A549 (cell line): ENCODE measurements at regions of chr11 and their contacts with region 1.

Region 1: GRCh38 chr11:35598254-35599125 is 19.8 kb upstream of the FJX1 start:
- DNase-seq: peak in 1 of 2 experiments; percentile 41
- ATAC-seq: peak; percentile 56 to 79; a peak in 5 of 6 replicates
- H3K4me3 ChIP-seq: no peak overlapping the region
- H3K27ac ChIP-seq: peak overlapping the region in 1 of 2 experiments; percentile 43; a peak in 3 of 6 replicates
- H3K4me1 ChIP-seq: no peaks in the 10 kb centered on the region; the same call in 2 of the 3 replicates
- CTCF ChIP-seq: no peak
- EP300 ChIP-seq: no peak
- POLR2A ChIP-seq: no peak
- RAD21 ChIP-seq: no peak

Region 2: GRCh38 chr11:35617687-35618496 is 19.4 kb after region 1 on chr11 and contains the start of gene FJX1:
- CTCF ChIA-PET with region 1: interaction called, 60 read pairs
- POLR2A ChIA-PET with region 1: interaction called, 3 read pairs
- DNase-seq: peak; percentile 81 to 83
- ATAC-seq: peak; percentile 68 to 73
- H3K4me3 ChIP-seq: peak within 1 kb of the TSS; percentile 90
- H3K27ac ChIP-seq: peak within 1 kb of the TSS; percentile 94 to 97
- H3K4me1 ChIP-seq: peaks cover 46% of the 10 kb centered on the region; the same call in 2 of the 3 replicates
- CTCF ChIP-seq: no peak
- EP300 ChIP-seq: peak in 1 of 2 experiments; percentile 27; a peak in 1 of 5 replicates
- POLR2A ChIP-seq: peak; percentile 19; the same call in 1 of the 2 replicates
- RAD21 ChIP-seq: no peak; a peak in 1 of 5 replicates
- polyA plus RNA-seq, gene FJX1: 6.5 and 7.1 TPM in 2 replicates